ENCODE measurements at regions of chr1 and their contacts with region 1.

Region 1: GRCh38 chr1:244796718-244797406 is 38.6 kb upstream of the COX20 start:
- DNase-seq: peak; percentile 89
- H3K4me3 Mint-ChIP-seq: no peak overlapping the region
- H3K27ac Mint-ChIP-seq: no peak overlapping the region
- H3K4me1 Mint-ChIP-seq: peaks cover 5% of the 10 kb centered on the region
- H3K27me3 Mint-ChIP-seq: no peaks in the 10 kb centered on the region
- CTCF ChIP-seq: peak; percentile 92

Region 2: DNA sequence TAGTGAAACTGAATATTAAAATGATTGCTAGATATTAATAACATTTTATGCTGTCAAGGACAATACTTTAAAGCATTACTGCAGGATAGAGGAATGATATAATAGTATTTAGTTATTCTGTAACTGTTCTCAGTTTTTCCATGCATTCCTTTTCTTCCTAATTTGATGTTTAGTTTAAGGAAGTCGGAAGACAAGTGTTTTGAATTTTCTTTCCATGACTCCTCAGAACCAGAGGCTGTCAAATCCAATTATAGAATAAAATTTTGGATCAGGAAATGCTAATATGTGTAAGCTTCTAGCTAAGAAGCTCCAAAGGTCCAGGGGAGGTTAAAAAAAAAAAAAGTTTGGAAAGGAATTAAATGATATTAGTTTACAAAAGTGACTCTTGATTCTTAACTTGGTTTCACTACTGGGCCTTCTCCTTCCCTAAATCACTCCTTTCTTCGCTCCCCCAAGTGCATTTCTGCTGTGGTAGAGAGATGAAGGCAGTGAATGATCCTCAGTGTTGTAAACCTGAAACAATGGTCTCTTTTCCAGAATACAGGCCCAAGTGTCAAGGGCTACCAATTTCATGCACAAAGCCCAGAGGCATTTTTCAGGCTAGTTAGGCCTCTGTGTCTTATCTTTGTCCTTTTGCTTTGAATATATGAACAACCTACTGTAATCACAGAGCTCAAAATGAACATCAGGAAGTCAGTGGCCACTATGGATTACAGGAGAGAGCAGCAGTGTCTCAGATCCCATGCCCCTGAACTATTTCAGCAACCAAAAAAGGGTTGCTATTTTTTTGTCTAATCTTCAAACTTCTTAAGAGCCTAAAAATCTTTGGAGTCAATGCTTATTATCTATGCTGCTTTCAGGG is 351.3 kb before region 1 on chr1:
- CTCF ChIA-PET with region 1: interaction called, 13 read pairs
- POLR2A ChIA-PET with region 1: no interaction called
- intact Hi-C with region 1: loop called (anchors 2 kb)
- DNase-seq: no peak
- H3K4me3 Mint-ChIP-seq: peak overlapping the region; percentile 26
- H3K27ac Mint-ChIP-seq: peak overlapping the region; percentile 47
- H3K4me1 Mint-ChIP-seq: peaks cover 65% of the 10 kb centered on the region
- H3K27me3 Mint-ChIP-seq: no peaks in the 10 kb centered on the region
- CTCF ChIP-seq: no peak

Region 3: DNA sequence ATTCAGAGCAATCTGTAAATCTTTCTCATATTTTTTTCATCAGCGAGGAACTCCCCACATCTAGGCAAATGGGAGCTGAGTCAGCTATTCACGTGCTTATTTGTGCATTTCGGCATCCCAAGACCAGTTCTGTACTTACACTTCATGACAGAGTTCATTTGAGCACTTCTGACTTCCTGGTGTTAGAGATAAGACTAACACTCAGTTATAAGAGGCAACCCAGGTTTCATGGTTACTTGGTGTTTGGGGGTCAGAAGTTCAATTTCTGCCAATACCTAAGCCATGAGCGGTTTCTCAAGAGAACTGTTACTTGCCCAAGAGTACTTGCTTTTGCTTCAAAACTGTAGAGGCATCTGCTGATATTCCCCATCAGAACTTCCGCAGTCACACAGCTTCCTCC is 168.1 kb before region 1 on chr1:
- CTCF ChIA-PET with region 1: interaction called, 20 read pairs
- POLR2A ChIA-PET with region 1: no interaction called
- intact Hi-C with region 1: no loop called
- DNase-seq: no peak
- H3K4me3 Mint-ChIP-seq: no peak overlapping the region
- H3K27ac Mint-ChIP-seq: no peak overlapping the region
- H3K4me1 Mint-ChIP-seq: no peaks in the 10 kb centered on the region
- H3K27me3 Mint-ChIP-seq: no peaks in the 10 kb centered on the region
- CTCF ChIP-seq: no peak

Region 4: GRCh38 chr1:244652699-244653466 is 144.0 kb before region 1 on chr1 and contains the start of gene DESI2:
- CTCF ChIA-PET with region 1: interaction called, 25 read pairs
- POLR2A ChIA-PET with region 1: interaction called, 14 read pairs
- intact Hi-C with region 1: loop called (anchors 1 kb)
- DNase-seq: peak; percentile 100
- H3K4me3 Mint-ChIP-seq: no peak within 1 kb of the TSS
- H3K27ac Mint-ChIP-seq: peak within 1 kb of the TSS; percentile 63
- H3K4me1 Mint-ChIP-seq: peaks cover 17% of the 10 kb centered on the region
- H3K27me3 Mint-ChIP-seq: no peaks in the 10 kb centered on the region
- CTCF ChIP-seq: peak; percentile 86
- total RNA-seq, gene DESI2: 99.0 and 101 TPM in 2 replicates

Region 5: GRCh38 chr1:244810221-244810620 is 13.4 kb after region 1 on chr1:
- CTCF ChIA-PET with region 1: interaction called, 40 read pairs
- POLR2A ChIA-PET with region 1: interaction called, 6 read pairs
- intact Hi-C with region 1: no loop called
- DNase-seq: no peak
- H3K4me3 Mint-ChIP-seq: no peak overlapping the region
- H3K27ac Mint-ChIP-seq: no peak overlapping the region
- H3K4me1 Mint-ChIP-seq: no peaks in the 10 kb centered on the region
- H3K27me3 Mint-ChIP-seq: no peaks in the 10 kb centered on the region
- CTCF ChIP-seq: no peak

Region 6: GRCh38 chr1:245045087-245045881 is 248.4 kb after region 1 on chr1:
- CTCF ChIA-PET with region 1: interaction called, 62 read pairs
- POLR2A ChIA-PET with region 1: interaction called, 9 read pairs
- intact Hi-C with region 1: loop called (anchors 1 kb)
- DNase-seq: peak; percentile 31
- H3K4me3 Mint-ChIP-seq: no peak overlapping the region
- H3K27ac Mint-ChIP-seq: no peak overlapping the region
- H3K4me1 Mint-ChIP-seq: peaks cover 17% of the 10 kb centered on the region
- H3K27me3 Mint-ChIP-seq: no peaks in the 10 kb centered on the region
- CTCF ChIP-seq: no peak

Region 7: GRCh38 chr1:245121513-245121912 is 324.7 kb after region 1 on chr1:
- CTCF ChIA-PET with region 1: no interaction called
- POLR2A ChIA-PET with region 1: no interaction called
- intact Hi-C with region 1: no loop called
- DNase-seq: no peak
- H3K4me3 Mint-ChIP-seq: no peak overlapping the region
- H3K27ac Mint-ChIP-seq: no peak overlapping the region
- H3K4me1 Mint-ChIP-seq: no peaks in the 10 kb centered on the region
- H3K27me3 Mint-ChIP-seq: no peaks in the 10 kb centered on the region
- CTCF ChIP-seq: no peak

Measured in MCF 10A (cell line).